ENCODE measurements at regions of chr2 and their contacts with region 1.

Region 1: GRCh38 chr2:113248997-113249770 is 29.5 kb downstream of the PAX8 start:
- DNase-seq: peak; percentile 78 to 81
- H3K4me3 ChIP-seq: no peak overlapping the region
- H3K4me3 Mint-ChIP-seq: no peak overlapping the region
- H3K27ac Mint-ChIP-seq: no peak overlapping the region
- H3K4me1 ChIP-seq: peaks cover 15% of the 10 kb centered on the region; the same call in 1 of the 2 replicates
- H3K4me1 Mint-ChIP-seq: peaks cover 20% of the 10 kb centered on the region
- H3K27me3 ChIP-seq: no peaks in the 10 kb centered on the region
- H3K27me3 Mint-ChIP-seq: no peaks in the 10 kb centered on the region
- CTCF ChIP-seq: peak; percentile 91

Region 2: GRCh38 chr2:113282747-113283533 is 33.8 kb after region 1 on chr2:
- CTCF ChIA-PET with region 1: interaction called, 3 read pairs
- POLR2A ChIA-PET with region 1: no interaction called
- intact Hi-C with region 1: loop called (anchors 1 kb)
- DNase-seq: peak; percentile 84 to 92
- H3K4me3 ChIP-seq: no peak overlapping the region
- H3K4me3 Mint-ChIP-seq: no peak overlapping the region
- H3K27ac Mint-ChIP-seq: peak overlapping the region; percentile 59
- H3K4me1 ChIP-seq: peaks cover 25% of the 10 kb centered on the region
- H3K4me1 Mint-ChIP-seq: peaks cover 25% of the 10 kb centered on the region
- H3K27me3 ChIP-seq: no peaks in the 10 kb centered on the region
- H3K27me3 Mint-ChIP-seq: no peaks in the 10 kb centered on the region
- CTCF ChIP-seq: peak; percentile 33 to 38

Region 3: GRCh38 chr2:113324684-113325160 is 75.5 kb after region 1 on chr2:
- CTCF ChIA-PET with region 1: no interaction called
- POLR2A ChIA-PET with region 1: no interaction called
- intact Hi-C with region 1: loop called (anchors 2 kb)
- DNase-seq: peak; percentile 81 to 83
- H3K4me3 ChIP-seq: peak overlapping the region; percentile 60
- H3K4me3 Mint-ChIP-seq: peak overlapping the region; percentile 68
- H3K27ac Mint-ChIP-seq: peak overlapping the region; percentile 33
- H3K4me1 ChIP-seq: peaks cover 19% of the 10 kb centered on the region
- H3K4me1 Mint-ChIP-seq: peaks cover 42% of the 10 kb centered on the region
- H3K27me3 ChIP-seq: no peaks in the 10 kb centered on the region
- H3K27me3 Mint-ChIP-seq: no peaks in the 10 kb centered on the region
- CTCF ChIP-seq: no peak

Region 4: DNA sequence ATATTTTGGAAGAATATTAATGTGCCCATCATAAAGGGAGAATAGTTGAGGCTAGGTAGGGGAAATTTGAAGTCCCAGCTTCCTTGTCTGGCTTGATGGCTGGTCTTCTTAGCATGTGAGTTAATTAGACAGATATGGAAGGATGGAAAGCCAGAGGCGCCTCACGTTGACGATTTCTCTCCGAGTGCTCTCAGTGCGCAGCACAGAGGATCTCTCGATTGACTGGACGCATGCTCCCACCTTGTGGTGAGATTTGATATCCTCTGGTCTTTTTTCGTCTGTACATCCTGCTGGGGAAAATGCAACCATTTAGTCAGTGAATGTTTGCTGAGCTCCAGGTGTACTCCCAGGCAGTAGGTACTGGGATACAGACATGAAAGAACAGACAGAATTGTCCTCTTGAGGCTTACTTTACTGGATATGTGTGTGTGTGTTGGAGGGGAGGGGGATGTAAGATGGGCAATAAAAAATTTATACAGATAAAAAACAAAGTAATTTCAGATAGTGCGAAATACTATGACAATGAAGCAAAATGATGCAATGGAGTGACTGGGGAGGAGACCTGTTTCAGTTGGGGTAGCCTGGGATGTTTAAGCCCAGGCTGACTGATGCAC is 121.4 kb after region 1 on chr2:
- CTCF ChIA-PET with region 1: interaction called, 12 read pairs
- POLR2A ChIA-PET with region 1: no interaction called
- intact Hi-C with region 1: loop called (anchors 1 kb)
- DNase-seq: peak; percentile 84 to 85
- H3K4me3 ChIP-seq: no peak overlapping the region
- H3K4me3 Mint-ChIP-seq: no peak overlapping the region
- H3K27ac Mint-ChIP-seq: no peak overlapping the region
- H3K4me1 ChIP-seq: peaks cover 19% of the 10 kb centered on the region
- H3K4me1 Mint-ChIP-seq: peaks cover 22% of the 10 kb centered on the region
- H3K27me3 ChIP-seq: no peaks in the 10 kb centered on the region
- H3K27me3 Mint-ChIP-seq: no peaks in the 10 kb centered on the region
- CTCF ChIP-seq: peak; percentile 63 to 84

Region 5: DNA sequence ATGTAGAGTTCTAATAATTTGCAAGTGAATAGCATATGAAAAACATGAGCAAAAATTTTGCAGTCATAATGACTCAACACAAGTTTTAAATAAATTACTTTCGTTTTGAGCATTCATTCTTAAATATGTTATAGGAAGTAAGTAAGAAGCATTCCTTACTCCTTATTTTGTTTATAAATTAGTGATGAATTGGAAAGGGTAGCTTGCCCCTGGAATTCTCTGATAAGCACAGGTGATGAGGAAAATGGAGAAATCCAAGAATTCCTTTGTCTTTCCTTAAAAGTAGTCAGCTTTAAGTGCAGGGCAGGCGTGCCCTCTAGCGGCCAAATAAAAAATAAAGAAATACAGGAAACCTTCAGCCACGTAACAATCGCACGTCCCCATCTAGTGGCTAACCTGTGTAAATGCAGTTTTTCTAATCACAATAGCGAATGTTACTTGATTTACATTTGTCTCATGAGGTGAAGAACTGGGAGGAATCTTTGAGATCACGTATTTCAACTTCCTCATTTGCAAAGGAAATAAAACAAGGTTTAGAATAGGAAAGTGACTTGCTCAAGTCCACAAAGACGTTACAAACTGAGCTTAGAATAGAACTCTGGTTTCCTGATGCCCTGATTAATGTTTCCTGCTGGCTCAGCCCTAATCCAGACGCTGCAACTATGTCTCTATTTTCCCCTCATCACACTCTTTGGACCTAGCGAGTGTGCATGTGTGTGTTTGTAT is 141.1 kb after region 1 on chr2:
- CTCF ChIA-PET with region 1: no interaction called
- POLR2A ChIA-PET with region 1: no interaction called
- intact Hi-C with region 1: loop called (anchors 1 kb)
- DNase-seq: peak; percentile 76 to 84
- H3K4me3 ChIP-seq: no peak overlapping the region
- H3K4me3 Mint-ChIP-seq: no peak overlapping the region
- H3K27ac Mint-ChIP-seq: no peak overlapping the region
- H3K4me1 ChIP-seq: no peaks in the 10 kb centered on the region
- H3K4me1 Mint-ChIP-seq: no peaks in the 10 kb centered on the region
- H3K27me3 ChIP-seq: no peaks in the 10 kb centered on the region
- H3K27me3 Mint-ChIP-seq: no peaks in the 10 kb centered on the region
- CTCF ChIP-seq: peak; percentile 85 to 95

Measured in Caco-2 (cell line).